ENCODE measurements at regions of chr12 and their contacts with region 1.

Region 1: DNA sequence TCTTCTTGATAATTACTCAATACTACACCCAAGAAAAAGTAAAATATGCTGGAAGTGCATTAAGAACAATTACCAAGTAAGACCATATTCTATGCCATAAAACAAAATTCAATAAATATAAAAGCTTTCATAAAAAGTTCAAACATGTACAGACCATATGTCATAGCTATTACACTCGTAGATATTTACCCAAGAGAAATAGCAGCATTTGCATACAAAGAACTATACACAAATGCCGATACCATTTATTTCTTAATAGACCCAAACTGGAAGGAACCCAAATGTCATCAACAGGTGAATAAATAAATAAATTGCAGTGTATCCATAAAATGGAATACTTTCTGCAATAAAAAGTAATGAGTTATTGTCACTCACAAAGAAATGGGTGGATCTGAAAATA is 78.3 kb upstream of the SLC16A7 start:
- DNase-seq: no peak
- ATAC-seq: no peak
- H3K4me3 ChIP-seq: no peak overlapping the region
- H3K4me3 Mint-ChIP-seq: no peak overlapping the region
- H3K27ac ChIP-seq: no peak overlapping the region
- H3K27ac Mint-ChIP-seq: peak overlapping the region in 1 of 9 donors; percentile 19
- H3K4me1 ChIP-seq: no peaks in the 10 kb centered on the region
- H3K4me1 Mint-ChIP-seq: peaks cover 0 to 16% (median 10%) of the 10 kb centered on the region in 7 donors
- H3K27me3 ChIP-seq: no peaks in the 10 kb centered on the region
- H3K27me3 Mint-ChIP-seq: no peaks in the 10 kb centered on the region

Region 2: DNA sequence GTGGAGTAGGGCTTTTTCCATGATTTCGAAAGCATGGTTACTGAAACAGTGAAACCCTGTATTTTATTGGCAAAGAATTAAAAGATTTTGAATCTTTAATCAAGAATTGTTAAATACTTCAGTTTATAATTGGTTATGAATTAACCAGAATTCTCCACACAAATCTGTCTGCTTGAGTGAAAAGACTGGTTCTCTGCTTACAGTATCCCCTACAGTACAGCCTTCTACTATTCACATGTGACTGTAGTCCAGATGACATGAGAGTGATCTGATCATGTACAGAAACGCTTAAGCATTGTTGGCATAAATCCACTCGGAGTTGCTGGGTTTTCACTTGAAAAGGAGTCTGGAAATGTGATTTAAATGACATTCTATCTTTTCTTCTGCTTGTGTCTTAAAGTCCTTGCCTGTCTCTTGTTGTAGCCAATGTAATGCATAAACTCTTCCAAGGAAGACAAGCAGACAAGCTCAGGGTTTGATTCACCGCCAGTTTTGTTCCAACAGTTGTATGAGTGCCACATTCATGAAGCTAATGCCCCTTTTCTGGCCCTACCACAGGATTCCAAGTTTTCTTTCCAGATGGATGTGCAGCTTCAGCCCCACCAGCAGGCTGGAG is 375.2 kb before region 1 on chr12:
- CTCF ChIA-PET with region 1: no interaction called
- POLR2A ChIA-PET with region 1: no interaction called
- intact Hi-C with region 1: no loop called
- DNase-seq: no peak
- ATAC-seq: no peak
- H3K4me3 ChIP-seq: no peak overlapping the region
- H3K4me3 Mint-ChIP-seq: no peak overlapping the region
- H3K27ac ChIP-seq: no peak overlapping the region
- H3K27ac Mint-ChIP-seq: no peak overlapping the region
- H3K4me1 ChIP-seq: no peaks in the 10 kb centered on the region
- H3K4me1 Mint-ChIP-seq: no peaks in the 10 kb centered on the region
- H3K27me3 ChIP-seq: no peaks in the 10 kb centered on the region
- H3K27me3 Mint-ChIP-seq: no peaks in the 10 kb centered on the region

Region 3: GRCh38 chr12:59570134-59570533 is 52.6 kb after region 1 on chr12:
- CTCF ChIA-PET with region 1: no interaction called
- POLR2A ChIA-PET with region 1: no interaction called
- intact Hi-C with region 1: no loop called
- DNase-seq: no peak
- ATAC-seq: no peak
- H3K4me3 ChIP-seq: no peak overlapping the region
- H3K4me3 Mint-ChIP-seq: no peak overlapping the region
- H3K27ac ChIP-seq: no peak overlapping the region
- H3K27ac Mint-ChIP-seq: no peak overlapping the region
- H3K4me1 ChIP-seq: no peaks in the 10 kb centered on the region
- H3K4me1 Mint-ChIP-seq: peaks cover 3 to 10% (median 7%) of the 10 kb centered on the region in 7 donors
- H3K27me3 ChIP-seq: peaks cover 0 to 3% of the 10 kb centered on the region in 2 donors
- H3K27me3 Mint-ChIP-seq: peaks cover 0 to 10% (median 0%) of the 10 kb centered on the region in 5 donors

Region 4: DNA sequence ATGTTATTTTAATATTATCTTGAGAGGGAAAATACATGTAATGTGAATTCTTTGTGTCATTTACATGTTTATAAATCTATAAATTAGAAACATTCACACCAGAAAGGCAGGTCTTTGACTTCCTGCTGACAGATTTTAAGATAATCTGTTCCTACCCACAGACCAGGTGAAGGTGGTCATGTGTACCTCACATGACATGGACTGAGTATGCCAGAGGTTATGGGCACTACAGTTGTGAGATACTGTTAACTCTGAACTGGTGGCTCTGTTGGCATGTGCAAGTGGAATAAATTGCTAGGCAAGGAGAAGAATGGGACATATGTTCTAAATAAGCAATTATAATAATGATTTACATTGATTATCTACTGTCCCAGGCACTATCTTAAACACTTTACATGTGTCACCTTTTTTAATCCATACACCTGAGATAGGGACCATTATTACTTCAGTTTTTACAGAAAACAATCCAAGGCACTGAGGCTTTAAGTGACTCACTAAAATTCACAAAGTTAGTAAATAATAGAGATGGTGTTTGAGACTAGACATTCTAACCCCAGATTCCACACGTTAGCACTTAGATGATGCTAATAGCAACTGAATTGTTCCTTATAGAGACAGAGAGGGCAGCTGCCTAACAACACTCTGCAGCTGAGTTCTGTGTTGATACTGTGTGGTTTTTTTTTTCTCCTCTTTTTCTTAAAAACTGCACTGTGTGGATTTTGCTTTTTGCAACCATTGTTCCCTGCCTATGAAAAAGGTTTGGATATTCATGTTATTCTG is 102.1 kb after region 1 on chr12:
- CTCF ChIA-PET with region 1: no interaction called
- POLR2A ChIA-PET with region 1: no interaction called
- intact Hi-C with region 1: loop called in 1 of 2 experiments (anchors 5 kb)
- DNase-seq: no peak
- ATAC-seq: no peak
- H3K4me3 ChIP-seq: no peak overlapping the region
- H3K4me3 Mint-ChIP-seq: peak overlapping the region in 3 of 10 donors; percentile 3 to 35 (median 22)
- H3K27ac ChIP-seq: no peak overlapping the region
- H3K27ac Mint-ChIP-seq: peak overlapping the region in 3 of 9 donors; percentile 22 to 80 (median 41)
- H3K4me1 ChIP-seq: peaks cover 8 to 17% of the 10 kb centered on the region in 2 donors
- H3K4me1 Mint-ChIP-seq: peaks cover 8 to 83% (median 76%) of the 10 kb centered on the region in 7 donors
- H3K27me3 ChIP-seq: no peaks in the 10 kb centered on the region
- H3K27me3 Mint-ChIP-seq: no peaks in the 10 kb centered on the region

Region 5: DNA sequence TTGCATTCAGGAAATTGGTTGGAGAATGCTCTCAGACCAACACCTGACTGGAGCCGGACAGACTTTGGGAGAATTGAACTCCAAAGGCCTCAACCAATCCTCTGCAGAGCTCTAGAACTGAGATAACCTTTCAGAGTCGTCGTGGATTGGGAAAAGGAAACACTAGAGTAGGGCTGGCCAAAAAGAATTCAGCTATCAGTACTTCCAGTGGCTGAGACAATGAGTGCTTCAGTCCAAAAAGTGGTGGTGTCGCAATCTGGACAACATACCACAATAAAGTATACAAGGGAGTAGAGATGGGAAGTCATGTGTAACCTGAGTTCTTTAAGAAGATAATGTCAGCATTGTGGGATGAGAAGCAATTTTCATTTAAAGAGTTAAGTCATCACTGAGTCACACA is 455.4 kb after region 1 on chr12:
- CTCF ChIA-PET with region 1: no interaction called
- POLR2A ChIA-PET with region 1: no interaction called
- intact Hi-C with region 1: no loop called
- DNase-seq: no peak
- ATAC-seq: no peak
- H3K4me3 ChIP-seq: no peak overlapping the region
- H3K4me3 Mint-ChIP-seq: no peak overlapping the region
- H3K27ac ChIP-seq: no peak overlapping the region
- H3K27ac Mint-ChIP-seq: no peak overlapping the region
- H3K4me1 ChIP-seq: no peaks in the 10 kb centered on the region
- H3K4me1 Mint-ChIP-seq: no peaks in the 10 kb centered on the region
- H3K27me3 ChIP-seq: no peaks in the 10 kb centered on the region
- H3K27me3 Mint-ChIP-seq: no peaks in the 10 kb centered on the region